CD8-positive, alpha-beta T cell (primary cell): ENCODE measurements at regions of chr6 and their contacts with region 1.

Region 1: GRCh38 chr6:105087571-105088211 is 92.1 kb downstream of the POPDC3 start:
- DNase-seq: peak in 5 of 9 experiments; percentile 10 to 74 (median 32)
- ATAC-seq: no peak
- H3K4me3 ChIP-seq: no peak overlapping the region
- H3K4me3 Mint-ChIP-seq: no peak overlapping the region
- H3K27ac ChIP-seq: no peak overlapping the region
- H3K27ac Mint-ChIP-seq: no peak overlapping the region
- H3K4me1 ChIP-seq: no peaks in the 10 kb centered on the region
- H3K4me1 Mint-ChIP-seq: no peaks in the 10 kb centered on the region
- H3K27me3 ChIP-seq: no peaks in the 10 kb centered on the region
- H3K27me3 Mint-ChIP-seq: peaks cover 4% of the 10 kb centered on the region
- CTCF ChIP-seq: peak; percentile 82

Region 2: DNA sequence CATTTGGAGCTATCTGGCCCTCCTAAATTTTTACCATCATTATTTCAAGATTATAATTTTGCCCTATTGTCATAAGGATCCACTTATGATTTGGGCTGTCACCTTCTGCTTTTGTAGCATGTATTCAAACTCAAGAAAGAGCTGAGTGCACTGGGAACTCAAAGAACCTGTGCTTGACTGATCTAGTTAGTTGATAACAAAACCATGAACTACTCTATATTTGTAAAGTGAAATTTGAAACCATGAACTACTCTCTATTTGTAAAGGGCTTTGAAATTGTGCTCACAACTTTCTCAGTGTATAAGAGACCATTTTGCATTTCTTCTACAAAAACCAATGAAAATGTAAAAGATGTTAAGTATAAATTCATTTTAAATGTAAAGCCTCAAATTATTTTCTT is 169.6 kb after region 1 on chr6:
- CTCF ChIA-PET with region 1: no interaction called
- POLR2A ChIA-PET with region 1: no interaction called
- intact Hi-C with region 1: no loop called
- DNase-seq: no peak
- ATAC-seq: no peak
- H3K4me3 ChIP-seq: no peak overlapping the region
- H3K4me3 Mint-ChIP-seq: no peak overlapping the region
- H3K27ac ChIP-seq: no peak overlapping the region
- H3K27ac Mint-ChIP-seq: no peak overlapping the region
- H3K4me1 ChIP-seq: no peaks in the 10 kb centered on the region
- H3K4me1 Mint-ChIP-seq: no peaks in the 10 kb centered on the region
- H3K27me3 ChIP-seq: no peaks in the 10 kb centered on the region
- H3K27me3 Mint-ChIP-seq: peaks cover 12% of the 10 kb centered on the region
- CTCF ChIP-seq: no peak

Region 3: GRCh38 chr6:105424175-105424783 is 336.6 kb after region 1 on chr6:
- CTCF ChIA-PET with region 1: interaction called, 53 read pairs
- POLR2A ChIA-PET with region 1: no interaction called
- intact Hi-C with region 1: loop called (anchors 1 kb)
- DNase-seq: peak; percentile 48 to 77 (median 68)
- ATAC-seq: peak; percentile 85
- H3K4me3 ChIP-seq: no peak overlapping the region
- H3K4me3 Mint-ChIP-seq: no peak overlapping the region
- H3K27ac ChIP-seq: no peak overlapping the region
- H3K27ac Mint-ChIP-seq: no peak overlapping the region
- H3K4me1 ChIP-seq: no peaks in the 10 kb centered on the region
- H3K4me1 Mint-ChIP-seq: no peaks in the 10 kb centered on the region
- H3K27me3 ChIP-seq: no peaks in the 10 kb centered on the region
- H3K27me3 Mint-ChIP-seq: peaks cover 5% of the 10 kb centered on the region
- CTCF ChIP-seq: peak; percentile 86

Region 4: GRCh38 chr6:106309766-106310373 is 1222.2 kb after region 1 on chr6:
- CTCF ChIA-PET with region 1: no interaction called
- POLR2A ChIA-PET with region 1: no interaction called
- intact Hi-C with region 1: loop called in 1 of 2 experiments (anchors 5 kb)
- DNase-seq: no peak
- ATAC-seq: no peak
- H3K4me3 ChIP-seq: no peak overlapping the region
- H3K4me3 Mint-ChIP-seq: no peak overlapping the region
- H3K27ac ChIP-seq: no peak overlapping the region
- H3K27ac Mint-ChIP-seq: no peak overlapping the region
- H3K4me1 ChIP-seq: peaks cover 5% of the 10 kb centered on the region
- H3K4me1 Mint-ChIP-seq: peaks cover 46% of the 10 kb centered on the region
- H3K27me3 ChIP-seq: no peaks in the 10 kb centered on the region
- H3K27me3 Mint-ChIP-seq: no peaks in the 10 kb centered on the region
- CTCF ChIP-seq: no peak